ENCODE measurements at regions of chr1 and their contacts with region 1.

Region 1: DNA sequence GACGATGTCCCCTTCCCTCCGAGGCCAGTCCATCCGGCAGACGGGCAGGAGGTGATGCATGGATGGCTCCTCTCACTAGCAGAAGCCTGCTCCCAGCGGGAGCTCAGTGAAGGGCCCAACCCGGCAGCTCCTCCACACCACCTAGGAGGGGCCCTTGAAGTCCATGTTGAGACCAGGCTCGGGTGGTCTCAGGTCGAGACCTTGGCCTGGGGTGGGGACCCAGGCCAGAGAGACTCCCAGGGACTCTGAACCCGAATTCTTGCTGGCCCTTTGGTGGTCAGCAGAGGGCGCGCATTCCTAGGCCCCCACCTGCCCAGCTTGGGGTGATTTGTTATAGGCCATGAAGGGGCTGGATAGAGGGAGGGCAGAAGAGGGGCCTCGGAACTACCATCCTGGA is 642 bp upstream of the NT5C1A start:
- DNase-seq: peak; percentile 77
- H3K4me3 ChIP-seq: peak overlapping the region; percentile 57 to 63
- H3K27ac ChIP-seq: peak overlapping the region in 1 of 2 experiments; percentile 87; a peak in 2 of 4 replicates
- H3K4me1 ChIP-seq: peaks cover 0 to 27% of the 10 kb centered on the region in 2 experiments; a peak in 1 of 4 replicates
- H3K27me3 ChIP-seq: peaks cover 44% of the 10 kb centered on the region
- CTCF ChIP-seq: peak; percentile 72
- EP300 ChIP-seq: no peak
- RAD21 ChIP-seq: peak; percentile 44

Region 2: DNA sequence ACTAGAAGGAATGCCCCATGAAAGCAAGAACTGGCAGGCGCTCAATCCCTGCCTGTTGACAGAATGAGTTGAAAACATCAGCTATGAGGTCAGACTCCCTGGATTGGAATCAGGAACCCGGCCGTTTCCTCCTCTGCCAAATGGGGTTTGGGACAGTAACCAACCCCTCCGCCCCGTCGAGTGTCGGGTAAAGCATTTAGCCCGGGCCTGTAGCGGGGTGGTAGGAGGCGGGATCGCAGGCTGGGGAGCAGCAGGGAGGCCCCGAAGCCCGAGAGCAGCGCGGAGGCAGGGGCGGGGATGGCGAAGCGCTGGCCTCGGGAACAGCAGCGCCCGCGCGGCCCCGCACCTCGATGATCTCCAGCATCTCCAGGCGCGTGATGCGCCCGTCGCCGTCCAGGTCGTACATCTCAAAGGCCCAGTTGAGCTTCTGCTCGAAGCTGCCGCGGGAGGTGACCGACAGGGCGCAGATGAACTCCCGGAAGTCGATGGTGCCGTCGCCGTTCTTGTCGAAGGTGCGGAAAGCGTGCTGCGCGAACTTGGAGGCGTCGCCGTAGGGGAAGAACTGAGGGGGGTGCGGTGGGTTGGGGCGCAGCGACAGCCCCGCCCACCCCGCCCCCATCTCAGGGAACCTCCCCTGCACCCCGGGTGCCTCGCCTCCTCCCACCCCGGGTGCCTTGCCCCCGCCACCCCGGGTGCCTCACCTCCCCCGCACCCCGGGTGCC is 11.2 kb after region 1 on chr1:
- CTCF ChIA-PET with region 1: interaction called, 35 read pairs
- POLR2A ChIA-PET with region 1: interaction called, 4 read pairs
- DNase-seq: peak; percentile 42
- H3K4me3 ChIP-seq: no peak overlapping the region
- H3K27ac ChIP-seq: no peak overlapping the region
- H3K4me1 ChIP-seq: peaks cover 0 to 6% of the 10 kb centered on the region in 2 experiments; a peak in 1 of 4 replicates
- H3K27me3 ChIP-seq: peaks cover 24% of the 10 kb centered on the region; the same call in 1 of the 2 replicates
- CTCF ChIP-seq: no peak
- EP300 ChIP-seq: no peak
- RAD21 ChIP-seq: no peak

Region 3: DNA sequence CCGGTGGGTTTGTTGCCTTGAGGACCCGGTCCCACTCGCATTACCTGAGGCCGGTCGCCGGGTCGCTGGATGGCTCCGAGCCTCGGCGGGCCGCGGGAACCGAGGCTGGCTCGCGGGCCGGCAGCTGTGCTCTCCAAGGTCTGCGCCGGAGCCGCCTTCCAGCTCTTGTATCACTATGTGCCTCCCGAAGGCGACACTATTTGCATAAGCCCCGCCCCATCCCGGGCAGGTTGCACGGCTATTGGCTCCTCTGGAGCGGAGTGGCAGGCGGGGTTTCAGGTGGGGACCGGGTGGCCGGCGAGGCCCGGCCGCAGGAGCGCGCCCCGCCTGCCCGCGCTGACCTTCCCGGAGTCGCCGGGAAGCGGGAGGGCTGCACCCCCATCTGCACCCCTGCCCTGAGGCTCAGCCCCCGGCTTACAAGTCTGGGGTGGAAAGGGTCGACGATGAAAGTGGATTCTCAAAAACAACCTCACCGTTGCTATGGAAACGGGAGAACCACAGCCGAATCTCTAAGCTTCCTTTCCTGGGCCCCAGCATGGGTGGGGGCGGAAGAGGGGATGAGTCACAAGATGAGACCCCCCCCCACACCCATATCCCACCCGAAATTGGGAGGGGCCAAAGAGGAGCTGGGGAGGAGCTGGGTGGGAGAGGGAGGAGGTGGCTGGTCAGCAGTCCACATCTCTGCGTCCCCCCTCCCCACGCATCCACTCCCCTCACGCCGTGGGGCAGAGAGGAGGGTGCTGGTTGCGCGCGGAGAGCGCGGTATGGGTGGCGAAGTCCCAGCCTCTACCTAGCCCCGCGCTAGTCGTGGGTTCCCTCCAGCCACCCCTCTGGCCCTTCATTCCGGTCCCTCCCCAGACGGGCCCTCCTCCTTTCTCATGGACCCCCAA is 19.0 kb after region 1 on chr1 and contains the start of gene HPCAL4:
- CTCF ChIA-PET with region 1: interaction called, 35 read pairs
- POLR2A ChIA-PET with region 1: interaction called, 24 read pairs
- DNase-seq: peak; percentile 96
- H3K4me3 ChIP-seq: peak within 1 kb of the TSS; percentile 49 to 73
- H3K27ac ChIP-seq: peak within 1 kb of the TSS in 1 of 2 experiments; percentile 67; a peak in 1 of 4 replicates
- H3K4me1 ChIP-seq: peaks cover 0 to 32% of the 10 kb centered on the region in 2 experiments; a peak in 2 of 4 replicates
- H3K27me3 ChIP-seq: peaks cover 45% of the 10 kb centered on the region
- CTCF ChIP-seq: no peak
- EP300 ChIP-seq: no peak
- RAD21 ChIP-seq: no peak
- polyA plus RNA-seq, gene HPCAL4: 0.15 and 0.55 TPM in 2 replicates

Region 4: GRCh38 chr1:39701049-39701439 is 28.5 kb after region 1 on chr1:
- CTCF ChIA-PET with region 1: interaction called, 71 read pairs
- POLR2A ChIA-PET with region 1: interaction called, 3 read pairs
- DNase-seq: no peak
- H3K4me3 ChIP-seq: no peak overlapping the region
- H3K27ac ChIP-seq: no peak overlapping the region
- H3K4me1 ChIP-seq: peaks cover 0 to 17% of the 10 kb centered on the region in 2 experiments; a peak in 1 of 4 replicates
- H3K27me3 ChIP-seq: peaks cover 17% of the 10 kb centered on the region; the same call in 1 of the 2 replicates
- CTCF ChIP-seq: no peak
- EP300 ChIP-seq: no peak
- RAD21 ChIP-seq: no peak

Measured in SK-N-SH (cell line).